ENCODE measurements at regions of chr16 and their contacts with region 1.

Region 1: GRCh38 chr16:69787883-69788282 is 25.8 kb downstream of the WWP2 start:
- DNase-seq: no peak
- H3K4me3 ChIP-seq: no peak overlapping the region
- H3K27ac ChIP-seq: no peak overlapping the region
- H3K4me1 ChIP-seq: no peaks in the 10 kb centered on the region
- H3K27me3 ChIP-seq: no peaks in the 10 kb centered on the region
- CTCF ChIP-seq: no peak

Region 2: GRCh38 chr16:69823831-69824563 is 36.1 kb after region 1 on chr16:
- CTCF ChIA-PET with region 1: no interaction called
- dilution Hi-C with region 1: no loop called
- in situ Hi-C with region 1: no loop called
- intact Hi-C with region 1: no loop called
- DNase-seq: no peak
- H3K4me3 ChIP-seq: no peak overlapping the region
- H3K27ac ChIP-seq: no peak overlapping the region
- H3K4me1 ChIP-seq: peaks cover 7% of the 10 kb centered on the region
- H3K27me3 ChIP-seq: no peaks in the 10 kb centered on the region
- CTCF ChIP-seq: no peak

Region 3: DNA sequence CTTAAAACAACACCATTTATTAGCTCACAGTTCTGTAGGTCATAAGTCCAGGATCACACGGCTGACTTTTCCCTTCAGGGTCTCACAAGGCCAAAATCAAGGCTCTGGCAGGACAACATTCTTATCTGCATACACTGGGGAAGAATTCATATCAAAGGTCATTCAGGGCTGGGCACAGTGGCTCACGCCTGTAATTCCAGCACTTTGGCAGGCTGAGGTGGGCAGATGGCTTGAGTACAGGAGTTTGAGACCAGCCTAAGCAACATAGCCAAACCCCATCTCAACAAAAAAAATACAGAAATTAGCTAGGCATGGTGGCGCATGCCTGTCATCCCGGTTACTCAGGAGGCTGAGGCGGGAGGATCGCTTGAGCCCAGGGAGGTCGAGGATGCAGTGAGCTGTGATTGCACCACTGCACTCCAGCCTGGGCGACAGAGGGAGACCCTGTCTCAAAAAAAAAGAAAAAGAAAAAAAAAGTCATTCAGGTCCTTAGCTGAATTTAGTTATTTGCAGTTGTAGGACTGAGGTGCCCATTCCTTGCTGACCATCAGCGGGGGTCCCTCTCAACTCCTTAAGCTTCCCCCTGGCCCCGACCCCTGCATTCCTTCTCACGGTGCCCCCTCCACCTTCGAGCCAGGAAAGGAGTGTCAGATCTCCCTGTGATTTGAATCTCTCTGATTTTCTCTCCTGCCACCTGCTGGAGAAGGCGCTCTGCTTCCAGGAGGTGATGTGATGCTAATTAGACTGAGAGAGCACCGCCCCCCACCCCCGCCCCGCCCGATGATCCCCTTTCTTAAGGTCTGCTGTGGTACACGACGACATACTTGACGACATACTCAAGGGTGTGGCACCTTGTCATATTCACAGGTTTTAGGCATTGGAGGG is 71.5 kb after region 1 on chr16:
- CTCF ChIA-PET with region 1: no interaction called
- dilution Hi-C with region 1: loop called (anchors 5 kb)
- in situ Hi-C with region 1: no loop called
- intact Hi-C with region 1: no loop called
- DNase-seq: peak; percentile 19
- H3K4me3 ChIP-seq: no peak overlapping the region
- H3K27ac ChIP-seq: no peak overlapping the region
- H3K4me1 ChIP-seq: no peaks in the 10 kb centered on the region
- H3K27me3 ChIP-seq: no peaks in the 10 kb centered on the region
- CTCF ChIP-seq: peak; percentile 28 to 54

Region 4: DNA sequence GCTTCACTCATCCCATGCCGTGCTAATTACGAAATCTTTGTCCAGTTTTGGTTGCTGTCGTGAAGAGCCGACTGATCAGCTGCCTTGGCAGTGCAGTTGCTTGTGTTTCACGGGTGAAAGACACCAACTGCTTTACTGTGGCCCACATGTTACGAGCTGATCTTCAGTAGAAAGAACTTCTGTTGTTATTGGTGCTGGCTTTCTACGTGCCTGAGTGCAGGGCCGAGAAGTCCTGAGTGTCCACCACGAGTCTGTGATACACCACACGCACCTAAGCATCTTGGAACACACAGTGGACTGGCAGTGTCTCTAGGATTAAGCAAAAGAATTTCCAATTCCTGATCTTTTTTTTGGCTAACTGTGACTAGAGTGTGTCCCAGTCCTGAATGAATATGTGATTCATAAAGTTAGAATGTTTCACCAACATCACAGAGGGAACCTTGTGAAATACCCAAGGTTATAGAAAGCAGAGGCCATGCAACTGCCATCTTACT is 92.8 kb after region 1 on chr16:
- CTCF ChIA-PET with region 1: no interaction called
- dilution Hi-C with region 1: loop called (anchors 5 kb)
- in situ Hi-C with region 1: no loop called
- intact Hi-C with region 1: no loop called
- DNase-seq: no peak
- H3K4me3 ChIP-seq: no peak overlapping the region
- H3K27ac ChIP-seq: no peak overlapping the region
- H3K4me1 ChIP-seq: no peaks in the 10 kb centered on the region
- H3K27me3 ChIP-seq: no peaks in the 10 kb centered on the region
- CTCF ChIP-seq: no peak